ENCODE measurements at regions of chr1 and their contacts with region 1.

Region 1: GRCh38 chr1:211680752-211681327 is 5.4 kb upstream of the NEK2 start:
- DNase-seq: peak; percentile 78
- ATAC-seq: peak; percentile 90
- H3K4me3 ChIP-seq: no peak overlapping the region
- H3K27ac ChIP-seq: peak overlapping the region; percentile 70
- H3K4me1 ChIP-seq: peaks cover 6% of the 10 kb centered on the region; the same call in 1 of the 2 replicates
- H3K27me3 ChIP-seq: no peaks in the 10 kb centered on the region
- CTCF ChIP-seq: peak; percentile 86

Region 2: GRCh38 chr1:211638689-211639121 is 42.1 kb before region 1 on chr1:
- CTCF ChIA-PET with region 1: interaction called, 12 read pairs
- POLR2A ChIA-PET with region 1: no interaction called
- in situ Hi-C with region 1: no loop called
- intact Hi-C with region 1: no loop called
- DNase-seq: no peak
- ATAC-seq: no peak
- H3K4me3 ChIP-seq: no peak overlapping the region
- H3K27ac ChIP-seq: peak overlapping the region; percentile 83
- H3K4me1 ChIP-seq: peaks cover 37% of the 10 kb centered on the region
- H3K27me3 ChIP-seq: no peaks in the 10 kb centered on the region
- CTCF ChIP-seq: no peak

Region 3: DNA sequence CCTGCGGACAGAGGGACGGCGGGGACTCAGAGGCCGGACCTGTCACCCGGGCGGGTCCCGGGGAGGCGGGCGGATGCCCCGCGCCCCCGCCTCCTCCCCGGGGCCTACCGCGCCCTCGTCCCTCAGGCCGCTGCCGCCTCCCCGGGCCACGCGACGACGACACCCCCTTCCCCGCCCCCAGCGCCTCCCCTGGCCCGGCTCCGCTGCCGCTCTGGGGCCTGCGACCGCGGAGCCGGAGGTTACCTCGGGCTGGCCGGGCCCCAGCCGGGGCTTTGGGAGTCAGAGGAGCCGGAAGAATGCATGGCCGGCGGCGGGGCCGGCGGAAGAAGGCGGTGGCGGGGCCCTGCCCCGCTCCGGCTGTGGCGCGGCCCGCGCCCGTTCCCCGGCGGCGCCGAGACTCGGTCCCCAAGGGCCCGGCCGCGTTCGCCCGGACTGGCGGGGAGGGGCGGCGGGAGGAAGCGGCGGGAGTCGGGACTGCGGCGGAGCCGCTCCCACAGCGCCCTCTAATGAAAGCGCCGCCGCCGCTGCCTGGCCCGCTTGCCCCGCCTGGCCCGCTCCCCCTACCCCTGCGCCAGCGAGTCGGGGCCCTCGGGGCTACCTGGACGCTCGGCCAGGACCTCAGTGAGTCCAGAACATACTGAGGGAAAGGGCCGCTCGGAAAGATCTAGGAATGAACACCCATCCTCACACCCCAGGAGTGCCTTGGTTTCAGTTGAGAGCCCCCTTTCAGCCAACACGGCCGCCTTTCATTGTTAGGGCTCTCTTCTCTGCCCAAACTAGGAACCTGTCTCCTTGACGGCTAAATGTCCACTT is 149.7 kb after region 1 on chr1 and contains the start of gene LPGAT1:
- CTCF ChIA-PET with region 1: interaction called, 5 read pairs
- POLR2A ChIA-PET with region 1: no interaction called
- in situ Hi-C with region 1: no loop called
- intact Hi-C with region 1: loop called (anchors 5 kb)
- DNase-seq: no peak
- ATAC-seq: peak; percentile 96
- H3K4me3 ChIP-seq: peak within 1 kb of the TSS; percentile 63 to 87
- H3K27ac ChIP-seq: peak within 1 kb of the TSS; percentile 92
- H3K4me1 ChIP-seq: peaks cover 30% of the 10 kb centered on the region
- H3K27me3 ChIP-seq: no peaks in the 10 kb centered on the region
- CTCF ChIP-seq: peak; percentile 91
- total RNA-seq, gene LPGAT1: 85.4 TPM

Region 4: DNA sequence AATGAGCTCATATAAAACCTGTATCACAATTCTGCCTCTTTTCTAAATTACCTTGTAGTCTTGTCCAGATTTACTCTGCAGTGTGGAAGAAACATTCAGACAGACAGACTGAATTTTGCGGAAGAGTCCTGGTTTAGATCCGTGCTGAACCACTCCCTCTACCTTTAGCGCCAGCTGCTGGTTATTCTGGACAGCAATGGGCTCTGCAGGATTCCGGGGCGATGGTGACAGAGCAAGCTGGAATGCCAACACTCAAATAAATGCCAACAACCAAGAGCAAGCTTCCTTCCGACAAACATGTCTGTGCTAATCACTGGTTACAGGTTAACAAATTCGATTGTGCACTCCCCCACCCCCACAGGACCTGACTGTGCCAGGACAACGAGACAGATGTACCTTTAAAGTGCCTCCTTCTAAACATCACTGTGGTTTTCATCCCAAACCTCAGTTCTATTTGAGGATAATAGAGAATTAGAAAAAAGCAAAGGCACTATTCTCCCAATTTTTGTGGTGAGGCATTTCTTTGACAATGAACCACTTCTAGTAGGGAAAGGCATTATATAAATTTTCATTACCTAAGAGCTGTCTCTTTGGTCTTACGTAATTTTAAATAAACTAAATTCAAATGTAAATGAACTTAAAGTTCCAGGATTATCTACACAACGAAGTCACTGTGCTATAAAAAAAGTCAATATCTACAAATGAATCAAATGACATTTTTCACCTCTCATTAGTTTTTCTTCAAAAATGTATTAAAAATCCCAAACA is 264.1 kb after region 1 on chr1:
- CTCF ChIA-PET with region 1: interaction called, 4 read pairs
- POLR2A ChIA-PET with region 1: no interaction called
- in situ Hi-C with region 1: no loop called
- intact Hi-C with region 1: loop called (anchors 5 kb)
- DNase-seq: no peak
- ATAC-seq: peak; percentile 92
- H3K4me3 ChIP-seq: no peak overlapping the region
- H3K27ac ChIP-seq: no peak overlapping the region
- H3K4me1 ChIP-seq: no peaks in the 10 kb centered on the region
- H3K27me3 ChIP-seq: no peaks in the 10 kb centered on the region
- CTCF ChIP-seq: peak; percentile 79

Region 5: GRCh38 chr1:212035123-212035834 is 354.4 kb after region 1 on chr1 and contains the starts of genes DTL and INTS7:
- CTCF ChIA-PET with region 1: interaction called, 8 read pairs
- POLR2A ChIA-PET with region 1: interaction called, 4 read pairs
- in situ Hi-C with region 1: no loop called
- intact Hi-C with region 1: loop called (anchors 10 kb)
- DNase-seq: peak; percentile 97
- ATAC-seq: peak; percentile 94
- H3K4me3 ChIP-seq: peak within 1 kb of the TSS; percentile 94 to 97
- H3K27ac ChIP-seq: peak within 1 kb of the TSS; percentile 97
- H3K4me1 ChIP-seq: peaks cover 61% of the 10 kb centered on the region
- H3K27me3 ChIP-seq: no peaks in the 10 kb centered on the region
- CTCF ChIP-seq: peak; percentile 98
- total RNA-seq, gene DTL: 26.7 TPM
- total RNA-seq, gene INTS7: 35.5 TPM